ENCODE measurements at regions of chr22 and their contacts with region 1.

Region 1: GRCh38 chr22:22959147-22959827 is 71.7 kb downstream of the IGLL5 start:
- DNase-seq: peak; percentile 90
- ATAC-seq: peak; percentile 52
- H3K4me3 ChIP-seq: no peak overlapping the region
- H3K4me3 Mint-ChIP-seq: no peak overlapping the region
- H3K27ac ChIP-seq: no peak overlapping the region
- H3K27ac Mint-ChIP-seq: peak overlapping the region; percentile 43
- H3K4me1 ChIP-seq: peaks cover 11 to 18% of the 10 kb centered on the region in 2 donors
- H3K4me1 Mint-ChIP-seq: peaks cover 15% of the 10 kb centered on the region
- H3K27me3 ChIP-seq: no peaks in the 10 kb centered on the region
- H3K27me3 Mint-ChIP-seq: no peaks in the 10 kb centered on the region
- CTCF ChIP-seq: peak; percentile 95

Region 2: DNA sequence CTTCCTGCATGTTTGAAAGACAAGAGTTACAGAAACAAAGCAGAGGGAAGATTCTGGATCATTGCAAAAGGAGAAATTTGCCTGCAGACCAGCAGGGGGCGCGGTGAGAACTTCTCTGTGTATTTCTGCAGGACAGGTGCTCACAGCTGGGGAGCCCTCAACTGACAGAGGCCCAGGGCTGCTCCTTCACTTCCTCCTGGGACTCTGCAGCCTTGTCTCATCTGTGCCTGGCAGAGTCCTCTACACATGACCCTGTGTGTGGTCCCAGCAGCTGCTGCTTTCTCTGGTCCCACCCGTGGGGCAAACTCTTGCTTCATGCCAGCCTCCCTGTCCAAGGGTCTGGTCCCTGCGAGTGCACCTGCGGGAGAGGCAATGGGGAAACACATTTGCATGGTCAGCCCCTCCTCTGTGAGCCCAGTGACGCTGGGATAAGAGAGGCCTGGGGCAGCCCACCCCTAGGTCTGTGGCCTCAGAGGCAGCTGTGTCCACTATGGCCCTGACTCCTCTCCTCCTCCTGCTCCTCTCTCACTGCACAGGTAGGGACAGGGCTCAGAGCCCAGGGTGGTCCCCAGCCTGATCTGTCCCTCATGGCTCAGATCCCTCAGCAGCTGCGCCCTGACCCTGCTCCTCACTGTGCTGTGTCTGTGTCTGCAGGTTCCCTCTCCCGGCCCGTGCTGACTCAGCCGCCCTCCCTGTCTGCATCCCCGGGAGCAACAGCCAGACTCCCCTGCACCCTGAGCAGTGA is 757.9 kb before region 1 on chr22:
- CTCF ChIA-PET with region 1: interaction called, 11 read pairs
- POLR2A ChIA-PET with region 1: no interaction called
- intact Hi-C with region 1: loop called (anchors 5 kb)
- DNase-seq: peak; percentile 69
- ATAC-seq: peak; percentile 72
- H3K4me3 ChIP-seq: no peak overlapping the region
- H3K4me3 Mint-ChIP-seq: peak overlapping the region; percentile 59
- H3K27ac ChIP-seq: peak overlapping the region; percentile 37 to 47
- H3K27ac Mint-ChIP-seq: peak overlapping the region; percentile 71
- H3K4me1 ChIP-seq: peaks cover 58 to 60% of the 10 kb centered on the region in 2 donors
- H3K4me1 Mint-ChIP-seq: peaks cover 61% of the 10 kb centered on the region
- H3K27me3 ChIP-seq: no peaks in the 10 kb centered on the region
- H3K27me3 Mint-ChIP-seq: no peaks in the 10 kb centered on the region
- CTCF ChIP-seq: peak; percentile 80

Region 3: GRCh38 chr22:22587577-22588188 is 371.6 kb before region 1 on chr22:
- CTCF ChIA-PET with region 1: interaction called, 35 read pairs
- POLR2A ChIA-PET with region 1: no interaction called
- intact Hi-C with region 1: loop called (anchors 2 kb)
- DNase-seq: no peak
- ATAC-seq: no peak
- H3K4me3 ChIP-seq: no peak overlapping the region
- H3K4me3 Mint-ChIP-seq: no peak overlapping the region
- H3K27ac ChIP-seq: peak overlapping the region in 1 of 2 donors; percentile 23
- H3K27ac Mint-ChIP-seq: no peak overlapping the region
- H3K4me1 ChIP-seq: peaks cover 36 to 38% of the 10 kb centered on the region in 2 donors
- H3K4me1 Mint-ChIP-seq: peaks cover 33% of the 10 kb centered on the region
- H3K27me3 ChIP-seq: no peaks in the 10 kb centered on the region
- H3K27me3 Mint-ChIP-seq: no peaks in the 10 kb centered on the region
- CTCF ChIP-seq: no peak

Region 4: GRCh38 chr22:22720201-22720723 is 239.0 kb before region 1 on chr22:
- CTCF ChIA-PET with region 1: interaction called, 6 read pairs
- POLR2A ChIA-PET with region 1: no interaction called
- intact Hi-C with region 1: loop called (anchors 1 kb)
- DNase-seq: peak; percentile 86
- ATAC-seq: peak; percentile 79
- H3K4me3 ChIP-seq: peak overlapping the region in 4 of 5 experiments; percentile 32 to 47 (median 38)
- H3K4me3 Mint-ChIP-seq: peak overlapping the region; percentile 60
- H3K27ac ChIP-seq: peak overlapping the region; percentile 92 to 96
- H3K27ac Mint-ChIP-seq: peak overlapping the region; percentile 95
- H3K4me1 ChIP-seq: peaks cover 43% of the 10 kb centered on the region in 2 donors
- H3K4me1 Mint-ChIP-seq: peaks cover 52% of the 10 kb centered on the region
- H3K27me3 ChIP-seq: no peaks in the 10 kb centered on the region
- H3K27me3 Mint-ChIP-seq: no peaks in the 10 kb centered on the region
- CTCF ChIP-seq: peak; percentile 78

Region 5: GRCh38 chr22:22810018-22810427 is 149.3 kb before region 1 on chr22:
- CTCF ChIA-PET with region 1: interaction called, 236 read pairs
- POLR2A ChIA-PET with region 1: no interaction called
- intact Hi-C with region 1: loop called (anchors 1 kb)
- DNase-seq: peak; percentile 84
- ATAC-seq: peak; percentile 76
- H3K4me3 ChIP-seq: peak overlapping the region in 1 of 5 experiments; percentile 1
- H3K4me3 Mint-ChIP-seq: no peak overlapping the region
- H3K27ac ChIP-seq: no peak overlapping the region
- H3K27ac Mint-ChIP-seq: no peak overlapping the region
- H3K4me1 ChIP-seq: peaks cover 9 to 26% of the 10 kb centered on the region in 2 donors
- H3K4me1 Mint-ChIP-seq: peaks cover 24% of the 10 kb centered on the region
- H3K27me3 ChIP-seq: peaks cover 0 to 9% (median 0%) of the 10 kb centered on the region in 4 experiments
- H3K27me3 Mint-ChIP-seq: peaks cover 12% of the 10 kb centered on the region
- CTCF ChIP-seq: peak; percentile 91

Region 6: GRCh38 chr22:22942511-22943329 is 16.6 kb before region 1 on chr22:
- CTCF ChIA-PET with region 1: interaction called, 117 read pairs
- POLR2A ChIA-PET with region 1: interaction called, 3 read pairs
- intact Hi-C with region 1: loop called (anchors 1 kb)
- DNase-seq: peak; percentile 89
- ATAC-seq: peak; percentile 66
- H3K4me3 ChIP-seq: peak overlapping the region in 1 of 5 experiments; percentile 5
- H3K4me3 Mint-ChIP-seq: peak overlapping the region; percentile 51
- H3K27ac ChIP-seq: peak overlapping the region; percentile 66 to 79
- H3K27ac Mint-ChIP-seq: peak overlapping the region; percentile 83
- H3K4me1 ChIP-seq: peaks cover 92 to 96% of the 10 kb centered on the region in 2 donors
- H3K4me1 Mint-ChIP-seq: peaks cover 86% of the 10 kb centered on the region
- H3K27me3 ChIP-seq: no peaks in the 10 kb centered on the region
- H3K27me3 Mint-ChIP-seq: no peaks in the 10 kb centered on the region
- CTCF ChIP-seq: peak; percentile 83

Region 7: DNA sequence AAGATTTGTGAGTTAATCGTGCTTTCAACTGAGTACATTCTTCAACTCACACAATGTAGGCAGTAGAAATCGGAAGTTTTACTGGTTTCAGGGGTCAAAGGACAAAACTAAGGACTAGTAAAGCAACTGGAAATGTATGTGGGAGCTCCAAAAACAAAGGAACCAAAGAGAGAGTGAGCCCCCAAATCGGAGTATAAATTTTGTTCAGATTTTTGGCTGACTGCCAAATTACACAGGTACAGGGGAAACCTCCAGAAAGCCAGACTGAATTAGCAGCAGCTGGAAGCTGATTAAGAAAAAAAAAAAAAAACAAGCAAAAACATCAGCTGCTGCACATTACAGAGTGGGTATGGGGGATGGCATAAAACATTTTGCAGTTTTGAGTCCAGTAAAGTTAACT is 35.9 kb after region 1 on chr22:
- CTCF ChIA-PET with region 1: no interaction called
- POLR2A ChIA-PET with region 1: no interaction called
- intact Hi-C with region 1: no loop called
- DNase-seq: no peak
- ATAC-seq: no peak
- H3K4me3 ChIP-seq: no peak overlapping the region
- H3K4me3 Mint-ChIP-seq: no peak overlapping the region
- H3K27ac ChIP-seq: no peak overlapping the region
- H3K27ac Mint-ChIP-seq: no peak overlapping the region
- H3K4me1 ChIP-seq: peaks cover 0 to 2% of the 10 kb centered on the region in 2 donors
- H3K4me1 Mint-ChIP-seq: peaks cover 4% of the 10 kb centered on the region
- H3K27me3 ChIP-seq: no peaks in the 10 kb centered on the region
- H3K27me3 Mint-ChIP-seq: peaks cover 9% of the 10 kb centered on the region
- CTCF ChIP-seq: no peak

Region 8: GRCh38 chr22:23192181-23192957 is 233.1 kb after region 1 on chr22:
- CTCF ChIA-PET with region 1: no interaction called
- POLR2A ChIA-PET with region 1: no interaction called
- intact Hi-C with region 1: no loop called
- DNase-seq: no peak
- ATAC-seq: no peak
- H3K4me3 ChIP-seq: no peak overlapping the region
- H3K4me3 Mint-ChIP-seq: no peak overlapping the region
- H3K27ac ChIP-seq: no peak overlapping the region
- H3K27ac Mint-ChIP-seq: no peak overlapping the region
- H3K4me1 ChIP-seq: peaks cover 0 to 6% of the 10 kb centered on the region in 2 donors
- H3K4me1 Mint-ChIP-seq: peaks cover 1% of the 10 kb centered on the region
- H3K27me3 ChIP-seq: no peaks in the 10 kb centered on the region
- H3K27me3 Mint-ChIP-seq: no peaks in the 10 kb centered on the region
- CTCF ChIP-seq: no peak

Region 9: GRCh38 chr22:23281406-23282088 is 322.3 kb after region 1 on chr22:
- CTCF ChIA-PET with region 1: interaction called, 48 read pairs
- POLR2A ChIA-PET with region 1: no interaction called
- intact Hi-C with region 1: loop called (anchors 1 kb)
- DNase-seq: peak; percentile 87
- ATAC-seq: peak; percentile 75
- H3K4me3 ChIP-seq: no peak overlapping the region
- H3K4me3 Mint-ChIP-seq: no peak overlapping the region
- H3K27ac ChIP-seq: no peak overlapping the region
- H3K27ac Mint-ChIP-seq: no peak overlapping the region
- H3K4me1 ChIP-seq: peaks cover 14 to 22% of the 10 kb centered on the region in 2 donors
- H3K4me1 Mint-ChIP-seq: peaks cover 23% of the 10 kb centered on the region
- H3K27me3 ChIP-seq: no peaks in the 10 kb centered on the region
- H3K27me3 Mint-ChIP-seq: no peaks in the 10 kb centered on the region
- CTCF ChIP-seq: peak; percentile 89

Measured in B cell (primary cell).